Right ventricle myocardium inferior (tissue), 1 donor: ENCODE measurements at regions of chr2 and their contacts with region 1.

Region 1: GRCh38 chr2:143334719-143335236 is 205.6 kb downstream of the ARHGAP15 start:
- DNase-seq: no peak
- ATAC-seq: no peak

Region 2: GRCh38 chr2:143347271-143347695 is 12.5 kb after region 1 on chr2:
- intact Hi-C with region 1: loop called (anchors 1 kb)
- DNase-seq: no peak
- ATAC-seq: no peak

Region 3: DNA sequence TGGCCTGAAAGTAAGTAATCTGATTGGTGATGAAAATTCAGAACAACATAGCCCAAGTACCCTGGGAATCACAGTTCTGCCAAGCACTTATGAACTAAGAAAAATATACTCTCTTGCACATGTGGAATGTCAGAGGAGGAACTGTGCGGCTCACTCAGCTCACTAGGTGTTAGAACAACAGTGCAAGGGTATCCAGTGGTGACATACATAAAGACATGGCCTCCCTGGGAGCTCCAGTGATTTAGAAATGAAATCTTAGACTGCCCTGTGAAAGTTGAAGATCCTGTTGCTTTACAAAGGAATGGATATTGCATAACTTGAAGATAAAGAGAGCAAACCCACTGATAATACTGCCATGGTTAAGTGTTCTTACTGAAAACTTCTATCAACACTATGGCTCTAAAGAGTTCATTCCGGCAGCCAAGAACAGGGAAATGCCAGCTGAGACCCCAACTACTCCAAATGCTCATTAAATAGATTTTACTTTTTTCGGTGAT is 40.7 kb after region 1 on chr2:
- intact Hi-C with region 1: no loop called
- DNase-seq: no peak
- ATAC-seq: no peak